CD4-positive, alpha-beta T cell (primary cell): ENCODE measurements at regions of chr2 and their contacts with region 1.

Region 1: DNA sequence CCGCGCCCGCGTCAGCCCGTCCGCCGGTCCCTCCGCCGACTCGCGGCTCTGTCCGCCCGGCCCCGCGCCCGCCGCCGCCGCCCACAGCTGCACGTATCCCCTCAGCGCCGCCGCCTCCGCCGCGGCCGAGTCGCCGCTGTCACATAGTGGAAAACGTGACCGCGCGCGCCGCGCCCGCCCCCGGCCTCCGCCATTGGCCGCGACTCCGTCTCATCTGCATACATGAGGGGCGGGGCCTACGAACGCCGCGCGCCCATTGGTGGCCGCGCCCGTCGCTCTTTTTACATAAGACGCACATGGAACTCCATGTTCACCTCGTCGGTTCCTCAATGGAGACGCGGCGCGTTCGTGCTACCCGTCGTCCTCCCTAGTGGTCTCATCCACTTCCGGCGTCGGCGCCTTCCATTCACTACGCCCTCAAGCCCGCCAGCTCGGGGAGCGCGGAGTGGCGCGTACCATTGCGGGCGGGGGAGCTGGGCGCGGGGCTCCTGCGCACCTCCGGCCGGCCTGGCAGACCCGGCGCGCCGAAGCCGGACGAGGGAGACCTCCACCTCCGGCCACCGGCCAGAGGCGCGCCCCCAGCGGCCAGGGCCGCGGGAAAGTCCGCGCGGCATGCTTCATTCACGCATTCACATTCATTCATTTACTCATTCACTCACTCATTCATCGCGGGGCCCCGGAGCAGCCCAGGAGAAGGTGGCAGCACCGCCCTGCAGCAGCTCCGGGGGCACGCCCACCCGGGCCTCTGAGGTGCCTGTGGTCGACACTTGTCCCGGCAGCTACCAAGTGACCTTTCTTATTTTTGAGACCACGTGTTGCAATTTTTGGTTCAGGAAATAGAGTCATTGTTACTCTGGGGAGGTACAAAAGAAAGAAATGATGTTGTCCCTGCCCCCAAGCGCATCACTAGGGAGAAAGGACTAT is 502 bp upstream of the PER2 start:
- DNase-seq: peak; percentile 95 to 99 (median 97)
- ATAC-seq: peak; percentile 89
- H3K4me3 ChIP-seq: peak overlapping the region; percentile 97
- H3K4me3 Mint-ChIP-seq: peak overlapping the region; percentile 99
- H3K27ac ChIP-seq: peak overlapping the region; percentile 51 to 81
- H3K27ac Mint-ChIP-seq: peak overlapping the region; percentile 99
- H3K4me1 ChIP-seq: peaks cover 38% of the 10 kb centered on the region
- H3K4me1 Mint-ChIP-seq: peaks cover 36% of the 10 kb centered on the region
- H3K27me3 ChIP-seq: no peaks in the 10 kb centered on the region
- H3K27me3 Mint-ChIP-seq: no peaks in the 10 kb centered on the region
- CTCF ChIP-seq: no peak

Region 2: DNA sequence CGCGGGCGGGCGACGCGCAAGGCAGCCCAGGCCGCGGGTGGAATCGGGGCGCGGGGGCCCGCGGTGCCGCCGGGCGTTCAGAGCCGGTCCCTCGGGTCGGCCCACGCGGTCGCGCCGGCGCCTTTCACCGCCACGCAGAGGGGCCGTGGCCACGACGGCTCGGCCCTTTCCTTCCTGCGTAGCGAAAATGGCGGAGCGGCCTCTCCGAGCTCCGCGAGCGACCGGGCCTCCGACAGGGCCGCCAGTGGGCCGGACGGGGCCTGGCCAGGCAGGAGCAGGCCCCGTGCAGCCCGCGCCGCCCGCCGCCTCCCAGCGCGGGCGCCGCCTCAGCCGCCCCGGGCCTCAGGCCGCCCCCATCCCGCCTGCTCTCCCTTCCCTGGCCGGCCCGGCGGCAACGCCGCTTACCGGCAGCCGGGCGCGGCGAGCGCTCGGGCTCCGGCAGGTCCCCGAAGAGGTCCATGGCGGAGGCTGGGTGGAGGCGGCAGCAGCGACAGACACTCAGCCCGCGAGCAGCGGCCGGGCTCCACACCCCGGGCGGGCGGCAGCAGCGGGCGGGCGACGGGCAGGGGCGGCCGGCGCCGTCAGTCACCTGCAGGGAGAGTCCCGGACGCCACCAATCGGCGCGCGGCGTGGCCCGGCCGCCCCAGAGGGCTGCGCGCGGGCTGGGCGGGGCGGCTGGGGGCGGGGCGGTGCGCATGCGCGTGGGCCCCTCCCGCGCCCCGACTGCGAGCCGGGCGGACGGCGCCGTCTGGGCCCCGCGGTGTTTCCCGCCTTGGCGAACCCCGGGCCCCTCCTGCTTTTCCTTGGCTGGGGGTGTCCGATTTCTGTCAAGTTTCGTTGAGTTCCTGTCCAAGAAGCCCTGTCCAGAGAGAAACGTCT is 85.6 kb before region 1 on chr2 and contains the start of gene ILKAP:
- CTCF ChIA-PET with region 1: no interaction called
- POLR2A ChIA-PET with region 1: interaction called, 6 read pairs
- intact Hi-C with region 1: loop called in 1 of 2 experiments (anchors 1 kb)
- DNase-seq: peak; percentile 83 to 97 (median 89)
- ATAC-seq: peak; percentile 97
- H3K4me3 ChIP-seq: peak within 1 kb of the TSS; percentile 70
- H3K4me3 Mint-ChIP-seq: peak within 1 kb of the TSS; percentile 95
- H3K27ac ChIP-seq: peak within 1 kb of the TSS; percentile 77 to 79
- H3K27ac Mint-ChIP-seq: peak within 1 kb of the TSS; percentile 91
- H3K4me1 ChIP-seq: peaks cover 34% of the 10 kb centered on the region
- H3K4me1 Mint-ChIP-seq: peaks cover 40% of the 10 kb centered on the region
- H3K27me3 ChIP-seq: no peaks in the 10 kb centered on the region
- H3K27me3 Mint-ChIP-seq: no peaks in the 10 kb centered on the region
- CTCF ChIP-seq: no peak
- total RNA-seq, gene ILKAP: 133 to 143 TPM

Region 3: GRCh38 chr2:238231251-238231793 is 57.6 kb before region 1 on chr2:
- CTCF ChIA-PET with region 1: no interaction called
- POLR2A ChIA-PET with region 1: interaction called, 5 read pairs
- intact Hi-C with region 1: loop called (anchors 1 to 2 kb)
- DNase-seq: peak; percentile 69 to 92 (median 77)
- ATAC-seq: peak; percentile 89
- H3K4me3 ChIP-seq: peak overlapping the region; percentile 59
- H3K4me3 Mint-ChIP-seq: peak overlapping the region; percentile 78
- H3K27ac ChIP-seq: no peak overlapping the region
- H3K27ac Mint-ChIP-seq: no peak overlapping the region
- H3K4me1 ChIP-seq: peaks cover 25% of the 10 kb centered on the region
- H3K4me1 Mint-ChIP-seq: peaks cover 23% of the 10 kb centered on the region
- H3K27me3 ChIP-seq: peaks cover 0 to 8% of the 10 kb centered on the region in 2 experiments
- H3K27me3 Mint-ChIP-seq: peaks cover 19% of the 10 kb centered on the region
- CTCF ChIP-seq: no peak

Region 4: GRCh38 chr2:238320246-238320647 is 31.3 kb after region 1 on chr2 and contains the start of gene TRAF3IP1:
- CTCF ChIA-PET with region 1: no interaction called
- POLR2A ChIA-PET with region 1: interaction called, 5 read pairs
- intact Hi-C with region 1: loop called (anchors 1 to 2 kb)
- DNase-seq: peak; percentile 68 to 93 (median 81)
- ATAC-seq: peak; percentile 94
- H3K4me3 ChIP-seq: peak within 1 kb of the TSS; percentile 60
- H3K4me3 Mint-ChIP-seq: peak within 1 kb of the TSS; percentile 88
- H3K27ac ChIP-seq: no peak within 1 kb of the TSS
- H3K27ac Mint-ChIP-seq: no peak within 1 kb of the TSS
- H3K4me1 ChIP-seq: peaks cover 20% of the 10 kb centered on the region
- H3K4me1 Mint-ChIP-seq: peaks cover 26% of the 10 kb centered on the region
- H3K27me3 ChIP-seq: no peaks in the 10 kb centered on the region
- H3K27me3 Mint-ChIP-seq: no peaks in the 10 kb centered on the region
- CTCF ChIP-seq: no peak
- total RNA-seq, gene TRAF3IP1: 5.1 to 6.9 TPM

Region 5: GRCh38 chr2:238336151-238336550 is 47.2 kb after region 1 on chr2:
- CTCF ChIA-PET with region 1: no interaction called
- POLR2A ChIA-PET with region 1: no interaction called
- intact Hi-C with region 1: no loop called
- DNase-seq: no peak
- ATAC-seq: no peak
- H3K4me3 ChIP-seq: no peak overlapping the region
- H3K4me3 Mint-ChIP-seq: no peak overlapping the region
- H3K27ac ChIP-seq: no peak overlapping the region
- H3K27ac Mint-ChIP-seq: no peak overlapping the region
- H3K4me1 ChIP-seq: no peaks in the 10 kb centered on the region
- H3K4me1 Mint-ChIP-seq: peaks cover 8% of the 10 kb centered on the region
- H3K27me3 ChIP-seq: no peaks in the 10 kb centered on the region
- H3K27me3 Mint-ChIP-seq: no peaks in the 10 kb centered on the region
- CTCF ChIP-seq: no peak